ENCODE measurements at regions of chr20 and their contacts with region 1.

Region 1: DNA sequence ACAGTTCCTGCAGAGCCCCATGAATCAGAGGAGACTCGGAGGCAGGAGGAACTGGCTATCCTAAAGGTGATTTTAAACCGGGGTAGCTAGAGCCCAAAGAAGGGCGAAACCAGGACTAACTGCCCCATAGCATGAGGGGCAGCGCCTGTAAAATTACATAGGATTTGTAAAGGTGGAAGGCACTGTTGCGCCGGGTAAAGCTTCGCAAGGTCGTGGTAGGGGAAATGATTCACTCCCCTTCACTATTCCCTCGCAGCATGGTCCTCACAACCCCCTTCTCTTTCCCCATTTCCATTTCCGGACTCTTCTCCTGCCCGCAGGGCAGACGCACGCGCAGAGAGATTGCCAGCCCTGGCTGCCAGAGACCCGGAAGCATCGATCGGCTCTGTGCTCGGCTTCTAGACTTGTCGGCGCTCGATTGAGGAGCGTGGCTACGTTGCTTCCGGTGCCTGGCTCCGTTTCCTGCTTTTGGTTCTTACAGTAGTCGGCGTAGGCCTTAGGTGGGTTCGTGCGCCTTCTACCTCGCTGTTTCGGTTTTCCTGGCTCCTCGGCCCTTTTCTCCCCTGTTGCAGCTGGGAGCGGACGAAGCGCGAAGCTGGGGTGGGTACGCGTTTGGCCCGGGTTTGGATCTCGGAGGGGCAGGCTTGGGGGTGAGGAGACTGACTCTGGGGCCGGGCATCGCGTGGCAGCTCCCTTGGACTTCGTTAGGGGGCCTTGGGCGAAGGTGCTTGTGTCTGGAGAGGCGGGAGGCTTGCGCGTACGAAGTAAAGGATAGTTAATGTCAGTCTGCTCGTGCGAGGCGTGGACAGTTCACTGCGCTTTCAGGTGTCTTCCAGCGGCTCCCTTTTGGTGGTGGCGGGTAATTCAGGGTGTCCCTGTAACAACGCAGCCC is at the start of gene SNRPB2:
- DNase-seq: peak; percentile 93
- ATAC-seq: peak; percentile 97
- H3K4me3 ChIP-seq: peak within 1 kb of the TSS; percentile 65 to 95 (median 93)
- H3K4me3 Mint-ChIP-seq: peak within 1 kb of the TSS; percentile 100
- H3K27ac ChIP-seq: peak within 1 kb of the TSS; percentile 79 to 90
- H3K27ac Mint-ChIP-seq: peak within 1 kb of the TSS; percentile 99
- H3K4me1 ChIP-seq: peaks cover 16 to 20% of the 10 kb centered on the region in 2 donors
- H3K4me1 Mint-ChIP-seq: peaks cover 39% of the 10 kb centered on the region
- H3K27me3 ChIP-seq: peaks cover 2 to 23% (median 16%) of the 10 kb centered on the region in 4 experiments
- H3K27me3 Mint-ChIP-seq: peaks cover 22% of the 10 kb centered on the region
- CTCF ChIP-seq: no peak
- total RNA-seq, gene SNRPB2: 36.2 and 38.3 TPM in 2 replicates

Region 2: DNA sequence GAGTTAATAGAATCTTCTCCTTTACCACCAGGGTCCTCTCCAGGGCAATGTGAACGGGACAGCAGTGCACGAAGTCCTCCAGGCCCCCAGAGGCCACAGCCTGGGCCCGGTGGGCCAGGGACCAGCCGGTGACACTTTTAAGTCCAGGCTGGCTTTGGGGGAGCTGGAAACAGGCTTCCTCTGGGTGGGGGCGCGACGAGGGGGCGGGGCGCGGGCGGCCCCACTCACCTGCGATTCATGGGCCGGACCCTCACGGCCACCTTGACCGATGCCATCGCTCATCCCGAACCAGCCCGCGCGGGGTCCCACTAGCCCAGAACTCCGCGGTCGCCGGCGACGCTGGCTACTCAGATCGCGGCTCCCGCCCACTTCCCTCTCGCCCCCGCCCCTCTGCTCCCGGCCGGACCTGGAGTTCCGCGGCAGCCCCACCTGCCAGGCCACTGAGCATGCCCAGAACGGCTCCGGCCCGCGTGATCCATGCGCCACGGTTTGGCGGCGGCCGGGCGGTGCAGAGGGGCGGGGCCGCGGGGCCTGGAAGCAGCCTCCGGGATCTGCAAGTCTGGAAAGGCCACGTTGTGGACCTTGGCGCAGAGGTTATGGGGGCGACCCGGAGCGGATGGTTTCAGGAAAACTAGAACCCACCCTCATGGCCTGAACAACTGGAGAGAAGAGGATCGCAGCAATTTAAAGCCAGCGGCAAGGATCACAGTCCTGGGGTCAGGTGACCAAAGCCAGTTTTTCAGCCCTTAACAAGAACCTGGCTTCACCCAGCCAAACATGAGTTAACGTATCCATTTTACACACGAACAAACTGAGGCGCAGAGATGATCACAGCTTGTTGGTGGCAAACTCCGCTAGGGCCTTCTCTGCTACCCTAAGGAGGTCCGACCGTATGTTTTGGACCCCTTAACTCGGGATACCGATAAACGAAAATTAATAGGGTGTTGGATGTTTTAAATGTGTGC is 156.5 kb before region 1 on chr20 and contains the start of gene KIF16B:
- CTCF ChIA-PET with region 1: no interaction called
- POLR2A ChIA-PET with region 1: no interaction called
- intact Hi-C with region 1: loop called (anchors 1 kb)
- DNase-seq: peak; percentile 89
- ATAC-seq: peak; percentile 89
- H3K4me3 ChIP-seq: peak within 1 kb of the TSS; percentile 72 to 86 (median 83)
- H3K4me3 Mint-ChIP-seq: peak within 1 kb of the TSS; percentile 92
- H3K27ac ChIP-seq: peak within 1 kb of the TSS; percentile 38 to 60
- H3K27ac Mint-ChIP-seq: peak within 1 kb of the TSS; percentile 84
- H3K4me1 ChIP-seq: peaks cover 22 to 28% of the 10 kb centered on the region in 2 donors
- H3K4me1 Mint-ChIP-seq: peaks cover 42% of the 10 kb centered on the region
- H3K27me3 ChIP-seq: no peaks in the 10 kb centered on the region
- H3K27me3 Mint-ChIP-seq: no peaks in the 10 kb centered on the region
- CTCF ChIP-seq: no peak
- total RNA-seq, gene KIF16B: 12.4 and 13.0 TPM in 2 replicates